GM13977 (cell line): ENCODE measurements at regions of chr12 and their contacts with region 1.

Region 1: DNA sequence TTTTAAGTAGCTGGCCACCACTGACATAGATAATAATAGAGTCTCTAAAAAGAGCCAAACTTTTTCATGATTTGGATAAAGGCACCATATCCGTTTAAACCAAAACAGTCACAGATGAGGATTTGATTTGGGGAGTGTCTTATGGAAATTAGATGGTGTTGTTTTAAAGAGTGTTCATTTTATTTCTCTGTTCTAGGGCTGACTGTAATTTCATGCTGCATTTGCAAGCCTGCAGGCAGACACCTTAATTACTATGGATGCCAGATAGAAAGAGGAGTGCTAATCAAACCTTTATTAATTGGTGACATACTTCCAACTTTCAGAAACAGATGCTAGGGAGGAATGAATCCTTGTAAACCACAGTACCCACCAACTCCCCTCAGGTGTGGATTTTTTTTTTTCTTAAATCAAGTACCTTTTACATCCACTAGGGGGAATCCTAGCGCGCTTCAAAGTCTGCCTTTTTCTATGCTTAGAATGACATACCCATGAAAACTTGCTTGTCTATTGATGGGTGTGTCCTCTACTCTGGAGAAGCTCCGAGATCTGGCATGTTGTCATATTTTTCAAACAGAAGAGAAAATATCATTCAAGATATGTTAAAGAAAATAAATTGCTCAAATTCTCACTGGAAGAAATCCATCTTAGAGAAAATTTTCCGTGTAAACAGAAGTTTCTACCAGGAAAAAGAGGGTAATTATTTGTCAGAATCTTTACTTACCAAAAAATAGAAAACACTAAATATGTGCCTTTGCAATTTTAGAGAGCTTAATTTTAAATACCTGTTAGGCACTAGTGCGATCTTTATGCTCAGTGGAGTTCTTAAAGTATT is 14.2 kb upstream of the PLXNC1 start:
- DNase-seq: peak; percentile 71
- CTCF ChIP-seq: peak; percentile 57

Region 2: DNA sequence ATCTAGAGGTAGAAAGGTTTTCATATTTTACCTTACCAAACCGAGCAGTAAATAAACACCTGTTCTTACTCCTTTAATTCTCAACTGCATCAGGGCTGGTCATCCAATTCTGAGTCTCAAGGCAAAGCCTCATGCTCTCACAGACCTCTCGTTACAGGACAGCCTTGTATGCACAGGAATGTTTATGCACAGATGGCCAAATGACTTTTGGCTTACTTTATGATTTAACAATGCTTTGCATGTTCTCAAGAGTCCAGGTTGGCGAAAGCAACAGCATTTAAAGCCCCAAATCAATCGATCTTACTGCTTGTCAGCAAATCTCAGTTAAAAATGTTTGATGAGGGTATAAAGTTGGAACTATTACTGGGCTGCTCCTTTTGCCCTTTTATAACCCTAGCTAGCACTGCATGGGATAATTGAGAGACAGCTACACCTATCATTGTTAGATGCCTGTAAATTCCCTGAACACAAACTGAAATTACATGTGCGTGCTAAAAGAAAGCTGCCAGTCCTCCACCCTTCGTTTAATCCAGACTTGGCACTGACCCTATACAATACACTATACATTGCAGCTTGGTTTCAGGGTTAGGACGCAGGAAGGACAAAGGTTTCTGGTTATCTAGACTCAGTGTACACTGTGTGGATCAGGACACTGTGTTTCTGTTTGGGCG is 452.5 kb after region 1 on chr12:
- in situ Hi-C with region 1: no loop called
- DNase-seq: no peak
- CTCF ChIP-seq: no peak

Region 3: GRCh38 chr12:94663702-94664101 is 529.5 kb after region 1 on chr12:
- in situ Hi-C with region 1: no loop called
- DNase-seq: no peak
- CTCF ChIP-seq: no peak

Region 4: DNA sequence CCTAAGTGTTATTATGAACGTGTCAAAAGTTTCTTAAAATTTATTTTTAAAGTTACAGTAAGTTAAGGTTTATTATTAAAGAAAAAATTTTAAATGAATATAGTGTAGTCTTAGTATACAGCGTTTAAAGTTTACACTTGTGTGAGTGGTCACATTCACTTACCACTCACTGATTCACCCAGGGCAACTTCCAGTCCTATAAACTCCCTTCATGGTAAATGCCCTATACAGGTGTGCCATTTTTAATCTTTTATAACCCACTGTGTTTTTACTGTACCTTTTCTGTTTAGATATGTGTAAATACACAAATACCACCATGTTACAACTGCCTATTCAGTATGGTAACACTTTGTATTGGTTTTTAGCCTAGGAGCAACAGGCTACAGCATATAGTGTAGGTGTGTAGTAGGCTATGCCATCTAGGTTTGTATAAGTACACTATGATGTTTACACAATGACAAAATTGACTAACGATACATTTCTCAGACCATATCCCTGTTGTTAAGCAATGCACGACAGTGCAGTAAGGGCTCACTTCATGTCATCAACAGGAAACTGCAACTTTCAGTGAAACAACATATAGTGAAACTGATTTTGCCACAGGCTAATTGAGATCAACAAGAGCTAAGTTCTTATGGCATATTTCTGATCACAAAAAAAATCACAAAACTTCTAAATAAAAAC is 628.2 kb after region 1 on chr12:
- in situ Hi-C with region 1: loop called (anchors 25 kb)
- DNase-seq: peak; percentile 35
- CTCF ChIP-seq: no peak